Endothelial cell of umbilical vein (primary cell): ENCODE measurements at regions of chr3 and their contacts with region 1.

Region 1: DNA sequence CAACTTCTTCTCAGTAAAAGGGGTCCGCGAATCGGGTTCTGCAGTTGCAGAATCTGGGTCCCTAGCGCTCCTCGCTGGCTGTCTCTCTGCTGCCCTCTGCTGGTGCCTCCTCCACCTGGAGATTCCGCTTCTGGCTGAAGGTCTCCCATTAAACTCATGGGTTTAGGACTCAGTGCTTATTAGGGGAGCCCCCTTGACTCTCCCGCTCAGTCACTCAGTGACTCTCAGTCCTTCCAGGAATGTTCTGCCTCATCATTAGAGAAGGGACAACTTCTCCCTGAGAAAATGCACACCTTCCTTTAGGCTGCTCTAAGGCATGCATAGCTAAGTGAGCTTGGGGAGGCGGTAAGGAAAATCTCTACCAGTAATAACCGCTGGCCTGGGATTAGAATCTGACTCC is 7.1 kb downstream of the CPN2 start:
- DNase-seq: peak; percentile 64
- H3K4me3 ChIP-seq: no peak overlapping the region
- H3K27ac ChIP-seq: no peak overlapping the region
- H3K4me1 ChIP-seq: no peaks in the 10 kb centered on the region
- H3K27me3 ChIP-seq: peaks cover 0 to 2% of the 10 kb centered on the region in 2 experiments
- CTCF ChIP-seq: peak; percentile 91 to 94
- POLR2A ChIP-seq: no peak

Region 2: GRCh38 chr3:193248848-193249468 is 1095.1 kb before region 1 on chr3:
- CTCF ChIA-PET with region 1: no interaction called
- POLR2A ChIA-PET with region 1: no interaction called
- dilution Hi-C with region 1: no loop called
- intact Hi-C with region 1: no loop called
- DNase-seq: no peak
- H3K4me3 ChIP-seq: no peak overlapping the region
- H3K27ac ChIP-seq: no peak overlapping the region
- H3K4me1 ChIP-seq: no peaks in the 10 kb centered on the region
- H3K27me3 ChIP-seq: no peaks in the 10 kb centered on the region
- CTCF ChIP-seq: no peak
- POLR2A ChIP-seq: no peak

Region 3: GRCh38 chr3:193780810-193781472 is 563.1 kb before region 1 on chr3:
- CTCF ChIA-PET with region 1: interaction called, 53 read pairs
- POLR2A ChIA-PET with region 1: no interaction called
- dilution Hi-C with region 1: no loop called
- intact Hi-C with region 1: loop called (anchors 1 kb)
- DNase-seq: peak; percentile 79
- H3K4me3 ChIP-seq: no peak overlapping the region
- H3K27ac ChIP-seq: peak overlapping the region; percentile 65
- H3K4me1 ChIP-seq: peaks cover 18% of the 10 kb centered on the region
- H3K27me3 ChIP-seq: peaks cover 17 to 19% of the 10 kb centered on the region in 2 experiments
- CTCF ChIP-seq: peak; percentile 84 to 88
- POLR2A ChIP-seq: no peak

Region 4: GRCh38 chr3:194333212-194333980 is 10.6 kb before region 1 on chr3:
- CTCF ChIA-PET with region 1: interaction called, 84 read pairs
- POLR2A ChIA-PET with region 1: no interaction called
- dilution Hi-C with region 1: no loop called
- intact Hi-C with region 1: loop called (anchors 1 kb)
- DNase-seq: peak; percentile 83
- H3K4me3 ChIP-seq: peak overlapping the region; percentile 11 to 50 (median 35)
- H3K27ac ChIP-seq: no peak overlapping the region
- H3K4me1 ChIP-seq: peaks cover 5% of the 10 kb centered on the region
- H3K27me3 ChIP-seq: peaks cover 0 to 17% of the 10 kb centered on the region in 2 experiments
- CTCF ChIP-seq: peak; percentile 96 to 98
- POLR2A ChIP-seq: no peak

Region 5: DNA sequence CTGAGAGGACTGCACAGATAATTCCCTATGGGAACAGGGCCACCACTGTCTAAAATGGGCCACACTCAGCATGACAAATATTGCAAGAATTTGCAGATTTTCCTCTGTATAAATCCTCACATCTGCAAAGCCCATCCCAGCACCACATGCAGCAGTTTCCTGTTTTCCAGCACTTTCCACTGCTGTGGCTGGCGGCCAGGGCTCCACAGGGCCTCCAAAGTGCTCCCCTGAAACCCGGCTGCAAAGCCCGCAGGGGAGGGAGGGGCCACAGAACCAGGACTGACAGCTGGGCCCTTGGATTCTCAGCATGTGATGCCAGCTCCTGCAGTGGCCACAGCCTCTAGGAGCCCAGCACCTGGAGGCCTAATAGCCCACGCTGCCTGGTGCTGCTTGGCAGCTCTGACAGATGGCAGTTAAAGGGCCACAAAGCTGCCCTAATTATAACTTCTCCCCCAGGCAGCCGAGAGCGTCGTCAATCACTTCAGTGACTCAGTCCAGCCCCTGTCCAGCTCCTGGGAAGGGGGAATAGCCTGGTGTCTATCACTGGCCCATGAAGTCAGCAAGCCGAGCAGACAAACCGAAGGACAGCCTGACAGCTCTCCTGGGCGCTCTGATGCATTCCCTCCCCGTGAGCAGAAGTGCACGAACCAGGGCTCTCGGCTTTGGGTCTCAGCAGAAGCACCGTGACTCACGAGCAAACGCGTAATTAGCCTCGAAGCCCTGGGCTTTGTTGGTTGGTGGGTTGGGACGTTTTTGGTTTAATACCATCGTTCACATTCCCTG is 20.8 kb after region 1 on chr3:
- CTCF ChIA-PET with region 1: interaction called, 16 read pairs
- POLR2A ChIA-PET with region 1: interaction called, 6 read pairs
- dilution Hi-C with region 1: no loop called
- intact Hi-C with region 1: no loop called
- DNase-seq: peak; percentile 86
- H3K4me3 ChIP-seq: no peak overlapping the region
- H3K27ac ChIP-seq: no peak overlapping the region
- H3K4me1 ChIP-seq: peaks cover 5% of the 10 kb centered on the region
- H3K27me3 ChIP-seq: peaks cover 10 to 22% of the 10 kb centered on the region in 2 experiments
- CTCF ChIP-seq: no peak
- POLR2A ChIP-seq: no peak

Region 6: DNA sequence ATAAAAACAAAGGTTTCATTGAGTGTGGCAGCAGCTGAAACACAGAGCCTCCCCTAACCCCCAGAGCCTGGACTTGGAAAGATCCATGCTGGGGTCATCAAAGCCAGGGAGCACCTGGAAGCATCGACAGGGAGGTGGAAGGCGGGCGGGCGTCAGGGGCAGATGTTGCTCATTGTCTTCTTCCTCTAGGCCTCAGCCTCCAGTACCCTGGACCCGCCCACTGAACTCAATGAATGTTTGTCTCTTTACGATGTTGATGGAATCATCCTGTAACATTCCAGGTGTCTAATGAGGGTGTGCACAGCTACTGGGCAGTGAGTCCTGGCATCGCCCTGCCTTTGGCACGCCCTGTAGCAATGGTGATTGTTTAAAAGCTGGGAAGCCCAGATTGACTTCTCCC is 45.3 kb after region 1 on chr3:
- CTCF ChIA-PET with region 1: interaction called, 74 read pairs
- POLR2A ChIA-PET with region 1: no interaction called
- dilution Hi-C with region 1: no loop called
- intact Hi-C with region 1: no loop called
- DNase-seq: no peak
- H3K4me3 ChIP-seq: no peak overlapping the region
- H3K27ac ChIP-seq: no peak overlapping the region
- H3K4me1 ChIP-seq: no peaks in the 10 kb centered on the region
- H3K27me3 ChIP-seq: peaks cover 18 to 29% of the 10 kb centered on the region in 2 experiments
- CTCF ChIP-seq: no peak
- POLR2A ChIP-seq: no peak

Region 7: DNA sequence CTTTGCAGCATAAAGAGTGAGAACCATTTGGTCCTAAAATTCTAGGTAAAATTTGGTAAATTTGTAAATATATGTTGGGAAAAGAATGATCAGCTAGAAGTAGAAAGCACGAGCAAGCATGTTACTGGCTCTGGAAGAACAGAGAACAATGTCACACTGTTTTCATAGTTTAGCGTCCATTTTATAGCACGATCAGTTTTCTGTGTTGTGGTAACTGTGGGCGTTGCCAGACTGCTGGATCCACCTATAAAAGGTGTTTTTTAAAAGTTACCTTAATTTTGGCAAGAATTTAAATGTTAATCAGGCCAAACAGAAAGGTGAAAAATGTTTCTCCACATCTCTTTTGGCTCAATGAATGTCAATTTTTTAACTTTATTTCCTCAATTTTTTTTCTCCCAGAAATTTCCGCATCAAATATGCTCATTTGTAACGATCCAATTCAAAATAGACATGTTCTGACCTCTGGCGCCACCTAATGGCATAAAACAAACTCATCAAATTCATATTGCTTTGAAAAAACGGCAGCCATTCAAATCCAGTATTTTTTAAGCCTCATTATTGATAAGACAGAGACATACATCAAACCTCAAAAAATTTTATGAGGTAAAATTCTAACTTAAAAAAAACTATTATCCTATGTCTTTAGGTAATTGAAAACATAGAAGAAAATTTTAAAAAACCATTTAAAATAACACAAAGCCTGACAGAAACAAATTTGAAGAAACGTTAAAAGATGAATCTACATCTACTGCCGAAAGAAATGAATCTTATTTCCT is 60.5 kb after region 1 on chr3:
- CTCF ChIA-PET with region 1: interaction called, 74 read pairs
- POLR2A ChIA-PET with region 1: no interaction called
- dilution Hi-C with region 1: no loop called
- intact Hi-C with region 1: loop called (anchors 1 kb)
- DNase-seq: peak; percentile 69
- H3K4me3 ChIP-seq: no peak overlapping the region
- H3K27ac ChIP-seq: no peak overlapping the region
- H3K4me1 ChIP-seq: no peaks in the 10 kb centered on the region
- H3K27me3 ChIP-seq: peaks cover 0 to 1% of the 10 kb centered on the region in 2 experiments
- CTCF ChIP-seq: peak; percentile 36 to 49
- POLR2A ChIP-seq: no peak